Heart left ventricle (tissue), 16 donors: ENCODE measurements at regions of chr10 and their contacts with region 1.

Region 1: GRCh38 chr10:22854935-22855421 is 72.9 kb upstream of the ARMC3 start:
- DNase-seq: peak in 1 of 5 donors; percentile 52
- ATAC-seq: peak; percentile 89 to 98 (median 95)
- H3K4me3 ChIP-seq: no peak overlapping the region
- H3K27ac ChIP-seq: peak overlapping the region in 10 of 12 donors; percentile 2 to 89 (median 44)
- H3K4me1 ChIP-seq: peaks cover 0 to 24% (median 7%) of the 10 kb centered on the region in 12 donors
- H3K27me3 ChIP-seq: no peaks in the 10 kb centered on the region
- CTCF ChIP-seq: peak in 8 of 12 donors; percentile 13 to 48 (median 24)
- POLR2A ChIP-seq: no peak

Region 2: DNA sequence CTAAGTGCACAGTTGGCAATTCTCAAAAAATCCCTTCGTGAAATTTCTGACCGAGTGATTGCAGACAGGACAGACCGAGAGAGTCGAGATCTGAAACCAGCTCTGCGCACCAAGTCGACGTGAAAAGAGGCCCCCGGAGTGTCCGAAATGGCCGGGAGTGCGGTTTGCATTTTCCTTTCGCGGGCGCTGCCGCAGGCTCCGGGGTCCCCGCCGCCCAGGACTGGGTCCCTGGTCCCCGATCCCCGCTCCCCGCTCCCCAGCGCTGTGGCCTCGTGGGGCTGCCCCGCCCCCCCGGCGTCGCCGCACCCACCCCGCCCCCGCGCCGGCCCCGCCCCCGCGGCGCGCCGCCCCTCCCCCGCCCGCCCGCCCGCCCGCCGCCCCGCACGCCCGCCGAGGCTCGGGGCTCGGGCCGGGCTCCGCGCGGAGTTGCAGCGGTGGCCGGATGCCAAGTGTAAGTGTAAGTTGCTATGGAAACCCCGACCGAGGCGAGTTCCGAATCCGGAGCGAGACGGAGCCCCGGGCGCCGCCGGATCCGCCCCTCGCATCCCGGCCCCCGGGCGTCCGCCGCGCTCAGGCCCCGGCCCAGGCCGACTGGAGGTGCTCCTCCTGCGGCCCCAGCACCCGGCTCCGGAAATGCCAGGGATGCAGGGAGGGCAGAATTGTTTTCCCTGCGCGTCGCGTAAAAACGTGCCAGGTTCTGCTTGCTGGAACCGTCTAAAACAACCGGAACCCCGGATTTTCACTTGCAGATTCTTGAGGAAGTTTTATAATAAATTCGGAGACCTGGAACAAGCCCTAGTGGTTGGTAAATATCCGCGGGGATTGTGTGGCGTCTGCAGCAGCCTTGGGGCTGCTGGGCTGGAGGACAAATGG is 529.5 kb before region 1 on chr10:
- intact Hi-C with region 1: no loop called
- DNase-seq: peak; percentile 80 to 89 (median 85)
- ATAC-seq: peak in 3 of 4 donors; percentile 54 to 67 (median 55)
- H3K4me3 ChIP-seq: peak overlapping the region; percentile 28 to 76 (median 62)
- H3K27ac ChIP-seq: peak overlapping the region in 11 of 12 donors; percentile 48 to 77 (median 65)
- H3K4me1 ChIP-seq: peaks cover 0 to 42% (median 31%) of the 10 kb centered on the region in 12 donors
- H3K27me3 ChIP-seq: peaks cover 0 to 29% (median 0%) of the 10 kb centered on the region in 9 donors
- CTCF ChIP-seq: no peak
- POLR2A ChIP-seq: no peak

Region 3: GRCh38 chr10:22606164-22606614 is 248.8 kb before region 1 on chr10:
- intact Hi-C with region 1: loop called in 2 of 10 experiments (anchors 10 kb)
- DNase-seq: peak in 2 of 5 donors; percentile 25 to 40
- ATAC-seq: peak; percentile 24 to 82 (median 64)
- H3K4me3 ChIP-seq: no peak overlapping the region
- H3K27ac ChIP-seq: peak overlapping the region in 1 of 12 donors; percentile 87
- H3K4me1 ChIP-seq: peaks cover 0 to 84% (median 2%) of the 10 kb centered on the region in 12 donors
- H3K27me3 ChIP-seq: no peaks in the 10 kb centered on the region
- CTCF ChIP-seq: no peak
- POLR2A ChIP-seq: no peak

Region 4: DNA sequence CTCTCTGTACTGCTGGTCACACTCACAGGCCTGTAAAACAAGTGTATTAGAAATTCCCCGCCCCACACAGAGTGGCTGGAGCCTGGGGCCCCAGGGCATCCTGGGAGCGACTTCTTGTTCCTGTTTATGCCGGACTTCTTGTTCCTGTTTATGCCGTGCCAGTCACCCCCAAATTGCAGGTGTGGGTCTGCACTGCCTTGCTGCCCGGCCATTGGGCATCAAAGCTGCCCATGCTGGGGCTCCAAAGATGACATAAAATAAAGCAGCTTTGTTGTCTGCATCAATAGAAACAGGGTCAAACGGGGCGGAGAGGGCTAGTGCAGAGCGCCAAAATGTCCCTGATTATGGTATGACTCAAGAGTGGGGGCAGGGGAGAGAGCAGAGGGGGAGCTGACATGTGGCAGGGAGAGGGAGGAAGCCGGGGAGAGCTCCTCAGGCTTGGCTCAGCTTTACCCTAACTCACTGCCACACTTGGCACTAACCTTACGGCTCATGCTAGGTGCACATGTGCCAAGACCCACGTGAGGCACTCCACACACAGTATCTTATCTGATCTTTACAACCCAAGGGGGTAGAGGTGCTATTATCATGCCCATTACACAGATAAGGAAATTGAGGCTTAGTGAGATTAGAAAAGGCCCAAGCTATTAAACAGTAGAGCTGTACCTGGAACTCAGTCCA is 239.0 kb before region 1 on chr10:
- intact Hi-C with region 1: loop called in 2 of 10 experiments (anchors 5 to 10 kb)
- DNase-seq: peak in 4 of 5 donors; percentile 35 to 68 (median 53)
- ATAC-seq: peak in 3 of 4 donors; percentile 36 to 49 (median 41)
- H3K4me3 ChIP-seq: peak overlapping the region in 2 of 12 donors; percentile 18 to 40
- H3K27ac ChIP-seq: peak overlapping the region in 9 of 12 donors; percentile 10 to 85 (median 14)
- H3K4me1 ChIP-seq: peaks cover 2 to 98% (median 50%) of the 10 kb centered on the region in 12 donors
- H3K27me3 ChIP-seq: no peaks in the 10 kb centered on the region
- CTCF ChIP-seq: no peak
- POLR2A ChIP-seq: no peak

Region 5: GRCh38 chr10:22742678-22743077 is 112.3 kb before region 1 on chr10:
- intact Hi-C with region 1: no loop called
- DNase-seq: no peak
- ATAC-seq: peak in 2 of 4 donors; percentile 42 to 66
- H3K4me3 ChIP-seq: no peak overlapping the region
- H3K27ac ChIP-seq: peak overlapping the region in 1 of 12 donors; percentile 54
- H3K4me1 ChIP-seq: peaks cover 0 to 36% (median 0%) of the 10 kb centered on the region in 12 donors
- H3K27me3 ChIP-seq: no peaks in the 10 kb centered on the region
- CTCF ChIP-seq: no peak
- POLR2A ChIP-seq: no peak

Region 6: GRCh38 chr10:22780474-22780885 is 74.5 kb before region 1 on chr10:
- intact Hi-C with region 1: no loop called
- DNase-seq: no peak
- ATAC-seq: peak in 3 of 4 donors; percentile 14 to 33 (median 26)
- H3K4me3 ChIP-seq: no peak overlapping the region
- H3K27ac ChIP-seq: peak overlapping the region in 2 of 12 donors; percentile 8 to 14
- H3K4me1 ChIP-seq: peaks cover 0 to 10% (median 0%) of the 10 kb centered on the region in 12 donors
- H3K27me3 ChIP-seq: no peaks in the 10 kb centered on the region
- CTCF ChIP-seq: no peak
- POLR2A ChIP-seq: no peak